ENCODE measurements at regions of chr10 and their contacts with region 1.

Region 1: GRCh38 chr10:110918643-110919363 is at the start of gene BBIP1:
- DNase-seq: peak; percentile 100
- H3K4me3 ChIP-seq: peak within 1 kb of the TSS; percentile 93 to 95 (median 94)
- H3K27ac ChIP-seq: peak within 1 kb of the TSS; percentile 97
- H3K4me1 ChIP-seq: peaks cover 5% of the 10 kb centered on the region
- H3K27me3 ChIP-seq: no peaks in the 10 kb centered on the region
- CTCF ChIP-seq: no peak
- total RNA-seq, gene BBIP1: 9.3 to 25.0 TPM

Region 2: GRCh38 chr10:110834629-110835301 is 84.0 kb before region 1 on chr10:
- CTCF ChIA-PET with region 1: no interaction called
- dilution Hi-C with region 1: no loop called
- in situ Hi-C with region 1: no loop called
- intact Hi-C with region 1: no loop called
- DNase-seq: no peak
- H3K4me3 ChIP-seq: no peak overlapping the region
- H3K27ac ChIP-seq: no peak overlapping the region
- H3K4me1 ChIP-seq: peaks cover 8% of the 10 kb centered on the region
- H3K27me3 ChIP-seq: no peaks in the 10 kb centered on the region
- CTCF ChIP-seq: no peak

Region 3: GRCh38 chr10:110901954-110902819 is 16.6 kb before region 1 on chr10:
- CTCF ChIA-PET with region 1: interaction called, 3 read pairs
- dilution Hi-C with region 1: no loop called
- in situ Hi-C with region 1: no loop called
- intact Hi-C with region 1: loop called (anchors 1 kb)
- DNase-seq: peak; percentile 85
- H3K4me3 ChIP-seq: no peak overlapping the region
- H3K27ac ChIP-seq: peak overlapping the region; percentile 72
- H3K4me1 ChIP-seq: peaks cover 25% of the 10 kb centered on the region
- H3K27me3 ChIP-seq: no peaks in the 10 kb centered on the region
- CTCF ChIP-seq: no peak

Region 4: DNA sequence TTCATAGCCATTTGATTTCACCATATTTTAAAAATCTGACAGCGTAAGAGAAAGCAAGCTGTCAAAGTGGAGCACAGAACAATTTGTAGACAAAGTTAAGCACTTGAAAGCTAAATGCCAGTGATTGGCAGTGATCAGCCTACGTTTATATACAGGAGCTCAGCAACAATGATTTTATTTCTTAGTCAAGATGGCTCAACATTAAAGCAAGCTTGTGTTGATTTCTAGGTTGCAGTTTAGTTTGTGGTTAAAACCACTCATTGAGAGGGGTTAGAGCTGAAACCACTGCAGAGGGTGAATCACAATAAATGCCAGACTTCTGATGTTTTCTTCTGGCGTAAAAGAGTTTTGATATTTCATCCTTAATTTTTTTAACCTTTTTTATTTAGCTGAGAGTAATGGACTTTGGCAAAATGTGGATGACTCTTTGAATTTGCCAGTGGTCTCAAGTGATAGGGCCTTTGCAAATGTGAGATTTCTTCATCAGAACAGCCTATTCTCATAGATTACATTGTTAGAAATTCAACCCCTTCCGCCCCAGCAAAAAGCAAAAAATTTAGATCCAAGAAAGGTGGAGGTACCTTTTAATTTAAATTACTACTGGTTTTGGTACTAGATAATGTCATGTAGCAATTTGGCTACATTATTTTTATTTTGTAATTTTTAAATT is 74.4 kb after region 1 on chr10:
- CTCF ChIA-PET with region 1: no interaction called
- dilution Hi-C with region 1: no loop called
- in situ Hi-C with region 1: no loop called
- intact Hi-C with region 1: loop called (anchors 5 kb)
- DNase-seq: peak; percentile 90
- H3K4me3 ChIP-seq: peak overlapping the region in 1 of 3 experiments; percentile 39
- H3K27ac ChIP-seq: peak overlapping the region; percentile 76
- H3K4me1 ChIP-seq: peaks cover 33% of the 10 kb centered on the region
- H3K27me3 ChIP-seq: no peaks in the 10 kb centered on the region
- CTCF ChIP-seq: no peak

Region 5: GRCh38 chr10:111007486-111007885 is 88.7 kb after region 1 on chr10:
- CTCF ChIA-PET with region 1: no interaction called
- dilution Hi-C with region 1: no loop called
- in situ Hi-C with region 1: no loop called
- intact Hi-C with region 1: loop called (anchors 5 kb)
- DNase-seq: no peak
- H3K4me3 ChIP-seq: no peak overlapping the region
- H3K27ac ChIP-seq: no peak overlapping the region
- H3K4me1 ChIP-seq: no peaks in the 10 kb centered on the region
- H3K27me3 ChIP-seq: no peaks in the 10 kb centered on the region
- CTCF ChIP-seq: no peak

Region 6: GRCh38 chr10:111037864-111038263 is 119.1 kb after region 1 on chr10:
- CTCF ChIA-PET with region 1: no interaction called
- dilution Hi-C with region 1: no loop called
- in situ Hi-C with region 1: no loop called
- intact Hi-C with region 1: loop called (anchors 5 kb)
- DNase-seq: no peak
- H3K4me3 ChIP-seq: no peak overlapping the region
- H3K27ac ChIP-seq: no peak overlapping the region
- H3K4me1 ChIP-seq: no peaks in the 10 kb centered on the region
- H3K27me3 ChIP-seq: no peaks in the 10 kb centered on the region
- CTCF ChIP-seq: peak in 1 of 2 donors; percentile 13

Region 7: DNA sequence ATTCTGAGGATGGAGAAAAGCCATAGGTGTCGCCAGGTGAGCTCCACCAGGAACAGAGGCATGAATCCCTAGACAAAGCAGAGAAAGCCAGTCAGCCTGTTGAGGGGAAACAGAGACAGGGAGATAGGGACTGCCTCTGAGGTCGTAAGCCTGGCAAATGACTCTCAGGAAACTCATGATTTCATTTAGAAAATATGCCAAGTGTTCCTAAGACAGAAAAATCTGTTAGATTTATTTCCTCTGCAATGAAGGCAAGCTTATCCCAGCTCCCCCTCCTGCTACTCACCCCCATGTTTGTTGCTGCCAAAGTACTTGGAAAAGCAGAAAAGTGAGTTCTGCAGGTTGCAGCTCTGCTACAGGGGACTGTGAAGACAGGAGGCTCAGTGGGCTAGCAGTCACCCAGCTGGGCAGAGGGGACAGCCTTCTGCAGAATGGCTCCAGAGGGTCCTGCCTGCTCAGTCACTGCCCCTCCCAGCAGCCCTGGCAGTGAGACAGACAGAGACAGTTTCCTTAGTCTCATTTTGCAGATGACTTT is 342.3 kb after region 1 on chr10:
- CTCF ChIA-PET with region 1: no interaction called
- dilution Hi-C with region 1: no loop called
- in situ Hi-C with region 1: no loop called
- intact Hi-C with region 1: no loop called
- DNase-seq: no peak
- H3K4me3 ChIP-seq: no peak overlapping the region
- H3K27ac ChIP-seq: no peak overlapping the region
- H3K4me1 ChIP-seq: no peaks in the 10 kb centered on the region
- H3K27me3 ChIP-seq: no peaks in the 10 kb centered on the region
- CTCF ChIP-seq: no peak

Region 8: DNA sequence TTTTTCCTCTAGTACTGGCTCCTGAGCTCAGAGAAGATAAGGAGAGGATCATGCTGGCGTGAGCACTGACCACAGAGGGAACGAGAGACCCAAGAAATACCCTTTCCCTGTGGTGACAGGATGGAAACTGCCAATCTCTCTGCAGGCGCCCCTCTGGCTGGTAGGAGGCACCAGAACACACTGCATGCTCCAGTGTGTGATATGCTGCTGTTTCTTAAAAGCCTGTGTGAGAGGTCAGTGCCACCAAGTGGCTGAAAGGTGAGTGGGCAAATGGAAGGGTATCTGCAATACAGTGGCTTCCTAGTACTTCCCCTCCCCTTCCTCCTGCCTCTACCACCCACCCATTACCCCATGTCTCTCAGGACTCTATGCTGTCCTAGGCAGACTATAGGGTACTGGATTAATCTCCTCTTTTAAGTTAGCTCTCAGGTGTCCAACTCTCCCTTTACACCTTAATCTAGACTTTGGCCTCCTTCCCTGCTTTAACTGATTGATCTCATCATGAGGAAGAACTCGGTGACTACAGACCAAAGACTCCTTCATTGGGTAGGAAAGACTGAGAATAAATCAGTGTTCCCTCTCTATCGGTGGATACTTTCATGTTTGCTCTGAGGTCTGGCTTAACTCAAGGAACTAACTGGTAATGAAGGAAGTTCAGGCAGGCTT is 441.6 kb after region 1 on chr10:
- CTCF ChIA-PET with region 1: no interaction called
- dilution Hi-C with region 1: no loop called
- in situ Hi-C with region 1: no loop called
- intact Hi-C with region 1: loop called (anchors 5 kb)
- DNase-seq: peak; percentile 19
- H3K4me3 ChIP-seq: no peak overlapping the region
- H3K27ac ChIP-seq: no peak overlapping the region
- H3K4me1 ChIP-seq: no peaks in the 10 kb centered on the region
- H3K27me3 ChIP-seq: no peaks in the 10 kb centered on the region
- CTCF ChIP-seq: peak; percentile 16 to 62

Measured in mammary epithelial cell (primary cell).